ENCODE measurements at regions of chr2 and their contacts with region 1.

Region 1: GRCh38 chr2:57906152-57906732 is 140.4 kb upstream of the VRK2 start:
- DNase-seq: peak in 1 of 35 experiments; percentile 49
- ATAC-seq: peak in 1 of 4 experiments; percentile 48
- H3K4me3 ChIP-seq: no peak overlapping the region
- H3K4me3 Mint-ChIP-seq: no peak overlapping the region
- H3K27ac ChIP-seq: no peak overlapping the region
- H3K27ac Mint-ChIP-seq: no peak overlapping the region
- H3K4me1 ChIP-seq: no peaks in the 10 kb centered on the region
- H3K4me1 Mint-ChIP-seq: peaks cover 13 to 28% (median 23%) of the 10 kb centered on the region in 3 donors
- H3K27me3 ChIP-seq: no peaks in the 10 kb centered on the region
- H3K27me3 Mint-ChIP-seq: no peaks in the 10 kb centered on the region

Region 2: DNA sequence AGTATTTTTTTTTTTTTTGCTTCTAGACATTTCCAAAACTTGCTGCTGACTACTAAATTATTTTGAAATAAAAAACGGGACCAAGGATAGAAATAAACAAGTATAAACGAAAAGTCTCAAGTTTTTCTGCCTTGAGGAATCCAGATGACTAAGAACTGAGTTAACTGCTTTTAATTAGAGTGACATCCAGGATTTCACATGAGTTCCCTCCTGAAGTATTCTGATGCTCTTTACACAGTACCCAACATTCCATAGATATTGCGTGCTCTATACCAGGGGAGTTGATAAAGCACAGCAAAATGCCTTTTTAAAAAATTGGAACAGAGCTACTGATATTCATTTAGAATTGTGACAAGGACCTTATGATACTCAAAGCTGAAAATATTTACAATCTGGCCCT is 1104.5 kb before region 1 on chr2:
- CTCF ChIA-PET with region 1: no interaction called
- POLR2A ChIA-PET with region 1: no interaction called
- DNase-seq: no peak
- ATAC-seq: no peak
- H3K4me3 ChIP-seq: no peak overlapping the region
- H3K4me3 Mint-ChIP-seq: no peak overlapping the region
- H3K27ac ChIP-seq: no peak overlapping the region
- H3K27ac Mint-ChIP-seq: no peak overlapping the region
- H3K4me1 ChIP-seq: no peaks in the 10 kb centered on the region
- H3K4me1 Mint-ChIP-seq: no peaks in the 10 kb centered on the region
- H3K27me3 ChIP-seq: no peaks in the 10 kb centered on the region
- H3K27me3 Mint-ChIP-seq: no peaks in the 10 kb centered on the region

Region 3: GRCh38 chr2:57711991-57712390 is 194.3 kb before region 1 on chr2:
- CTCF ChIA-PET with region 1: no interaction called
- POLR2A ChIA-PET with region 1: interaction called in 1 of 2 experiments, 10 read pairs
- DNase-seq: no peak
- ATAC-seq: no peak
- H3K4me3 ChIP-seq: no peak overlapping the region
- H3K4me3 Mint-ChIP-seq: no peak overlapping the region
- H3K27ac ChIP-seq: no peak overlapping the region
- H3K27ac Mint-ChIP-seq: no peak overlapping the region
- H3K4me1 ChIP-seq: no peaks in the 10 kb centered on the region
- H3K4me1 Mint-ChIP-seq: no peaks in the 10 kb centered on the region
- H3K27me3 ChIP-seq: no peaks in the 10 kb centered on the region
- H3K27me3 Mint-ChIP-seq: no peaks in the 10 kb centered on the region

Region 4: DNA sequence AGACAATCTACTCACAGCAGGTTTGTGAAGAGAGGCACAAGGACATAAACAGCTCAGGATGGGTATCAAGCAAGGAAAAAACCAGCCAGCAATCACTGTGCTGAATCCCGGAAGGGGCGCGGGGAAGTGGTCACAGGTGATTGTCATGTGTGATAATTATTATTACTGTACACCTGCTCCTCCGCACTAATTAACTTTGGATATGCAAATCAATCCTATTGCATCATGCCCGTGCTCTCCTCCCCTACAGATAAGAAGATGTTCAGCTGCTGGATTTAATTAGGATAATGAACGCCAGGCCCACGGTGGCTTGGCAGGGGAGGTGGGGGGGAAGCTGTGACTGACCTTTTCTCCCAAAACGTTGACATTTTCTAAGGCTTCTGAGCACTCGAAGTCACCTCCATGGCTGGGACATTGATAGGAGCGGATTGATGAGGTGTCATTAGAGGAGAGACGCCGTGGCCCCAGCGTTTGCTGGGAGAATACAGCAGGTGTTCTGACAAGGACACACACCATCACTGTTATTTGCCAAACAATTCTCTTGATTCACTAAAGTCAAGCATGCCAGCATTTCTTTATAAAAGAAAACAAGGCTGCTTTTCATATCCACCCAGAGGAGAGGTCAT is 20.0 kb before region 1 on chr2:
- CTCF ChIA-PET with region 1: no interaction called
- POLR2A ChIA-PET with region 1: no interaction called
- DNase-seq: no peak
- ATAC-seq: no peak
- H3K4me3 ChIP-seq: no peak overlapping the region
- H3K4me3 Mint-ChIP-seq: no peak overlapping the region
- H3K27ac ChIP-seq: no peak overlapping the region
- H3K27ac Mint-ChIP-seq: no peak overlapping the region
- H3K4me1 ChIP-seq: peaks cover 0 to 8% of the 10 kb centered on the region in 2 experiments
- H3K4me1 Mint-ChIP-seq: peaks cover 7 to 9% (median 8%) of the 10 kb centered on the region in 3 donors
- H3K27me3 ChIP-seq: no peaks in the 10 kb centered on the region
- H3K27me3 Mint-ChIP-seq: peaks cover 0 to 2% of the 10 kb centered on the region in 2 donors

Region 5: GRCh38 chr2:57936216-57936615 is 30.0 kb after region 1 on chr2:
- CTCF ChIA-PET with region 1: no interaction called
- POLR2A ChIA-PET with region 1: no interaction called
- DNase-seq: no peak
- ATAC-seq: no peak
- H3K4me3 ChIP-seq: no peak overlapping the region
- H3K4me3 Mint-ChIP-seq: no peak overlapping the region
- H3K27ac ChIP-seq: no peak overlapping the region
- H3K27ac Mint-ChIP-seq: no peak overlapping the region
- H3K4me1 ChIP-seq: no peaks in the 10 kb centered on the region
- H3K4me1 Mint-ChIP-seq: no peaks in the 10 kb centered on the region
- H3K27me3 ChIP-seq: no peaks in the 10 kb centered on the region
- H3K27me3 Mint-ChIP-seq: peaks cover 0 to 3% of the 10 kb centered on the region in 2 donors

Measured in T-cell (primary cell).